A549 (cell line): ENCODE measurements at regions of chr15 and their contacts with region 1.

Region 1: DNA sequence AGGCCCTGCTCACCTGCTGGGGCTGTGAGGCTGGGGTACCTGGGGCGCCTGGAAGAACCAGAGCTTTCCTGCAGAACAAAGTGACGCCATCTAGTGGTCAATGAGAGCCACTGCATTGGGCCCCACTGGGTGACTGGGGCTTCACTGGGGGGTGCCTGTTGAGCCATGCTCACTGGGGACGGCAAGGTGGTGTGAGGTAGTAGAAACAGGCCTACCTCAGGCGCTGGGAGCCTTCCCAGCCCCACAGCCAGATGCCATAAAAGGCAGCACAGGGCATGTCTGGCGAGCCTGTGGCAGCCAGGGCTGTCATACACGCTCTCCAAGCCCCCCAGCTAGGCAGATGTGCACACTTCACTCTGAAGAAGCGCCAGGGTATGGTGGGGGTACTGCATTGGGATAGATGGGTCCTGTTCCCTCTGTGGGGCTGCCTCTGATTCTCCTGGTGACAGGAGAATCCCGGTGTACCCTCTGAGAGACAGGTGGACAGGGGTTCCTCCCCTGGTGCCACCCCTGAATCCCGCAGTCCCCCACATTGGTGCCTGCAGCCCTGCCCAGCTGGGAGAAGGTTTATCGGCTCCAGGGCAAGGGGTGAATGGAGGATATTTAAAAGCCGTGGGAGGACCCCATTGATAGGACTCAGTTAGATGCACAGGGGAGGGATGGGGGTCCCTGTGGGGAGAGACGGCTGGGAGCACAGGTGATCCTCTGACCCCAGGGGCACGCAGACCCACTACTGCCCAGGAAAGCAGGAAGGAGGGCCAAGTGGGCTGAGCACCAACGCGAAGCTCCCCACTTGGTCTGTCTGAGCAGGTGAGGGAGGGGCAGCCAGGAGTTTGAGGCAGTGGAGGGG is 178.8 kb downstream of the NSMCE3 start:
- DNase-seq: peak; percentile 41 to 52
- ATAC-seq: peak; percentile 14 to 85; a peak in 4 of 6 replicates
- H3K4me3 ChIP-seq: no peak overlapping the region
- H3K27ac ChIP-seq: no peak overlapping the region
- H3K4me1 ChIP-seq: no peaks in the 10 kb centered on the region
- CTCF ChIP-seq: peak; percentile 60
- EP300 ChIP-seq: no peak
- POLR2A ChIP-seq: no peak
- RAD21 ChIP-seq: peak; percentile 51 to 54

Region 2: GRCh38 chr15:28921919-28922706 is 168.7 kb before region 1 on chr15:
- CTCF ChIA-PET with region 1: interaction called, 12 read pairs
- POLR2A ChIA-PET with region 1: no interaction called
- DNase-seq: no peak
- ATAC-seq: peak in 1 of 2 experiments; percentile 36; a peak in 2 of 6 replicates
- H3K4me3 ChIP-seq: no peak overlapping the region
- H3K27ac ChIP-seq: no peak overlapping the region
- H3K4me1 ChIP-seq: peaks cover 9% of the 10 kb centered on the region
- CTCF ChIP-seq: no peak
- EP300 ChIP-seq: no peak
- POLR2A ChIP-seq: no peak
- RAD21 ChIP-seq: peak in 1 of 2 experiments; percentile 33; a peak in 2 of 5 replicates

Region 3: DNA sequence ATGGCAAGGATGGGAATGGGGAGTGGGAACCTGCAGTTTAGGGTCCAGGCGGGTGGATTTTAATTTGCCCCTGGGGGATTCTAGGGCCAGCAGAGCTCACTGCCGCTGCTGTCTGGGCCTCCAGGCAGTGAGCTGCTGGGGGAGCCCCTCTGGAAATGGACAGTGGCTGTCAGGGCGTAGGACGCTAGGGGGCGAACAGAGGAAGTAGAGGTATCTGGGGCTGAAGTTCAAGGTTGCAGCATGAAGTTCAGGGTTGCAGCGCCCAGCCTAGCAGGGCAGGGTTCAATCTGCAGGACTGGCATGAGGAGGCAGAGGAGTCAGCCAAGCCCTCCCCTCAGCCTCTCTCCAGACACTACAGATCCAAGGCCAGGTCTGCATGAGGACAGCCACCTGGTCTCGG is 155.5 kb before region 1 on chr15:
- CTCF ChIA-PET with region 1: interaction called, 10 read pairs
- POLR2A ChIA-PET with region 1: no interaction called
- DNase-seq: peak in 1 of 2 experiments; percentile 46
- ATAC-seq: peak; percentile 57 to 85; a peak in 4 of 6 replicates
- H3K4me3 ChIP-seq: no peak overlapping the region
- H3K27ac ChIP-seq: no peak overlapping the region
- H3K4me1 ChIP-seq: no peaks in the 10 kb centered on the region
- CTCF ChIP-seq: peak; percentile 41
- EP300 ChIP-seq: no peak
- POLR2A ChIP-seq: no peak
- RAD21 ChIP-seq: peak; percentile 31 to 45; a peak in 3 of 5 replicates

Region 4: GRCh38 chr15:29070449-29071231 is 20.2 kb before region 1 on chr15:
- CTCF ChIA-PET with region 1: interaction called, 10 read pairs
- POLR2A ChIA-PET with region 1: no interaction called
- DNase-seq: no peak
- ATAC-seq: no peak
- H3K4me3 ChIP-seq: no peak overlapping the region
- H3K27ac ChIP-seq: no peak overlapping the region
- H3K4me1 ChIP-seq: no peaks in the 10 kb centered on the region
- CTCF ChIP-seq: no peak
- EP300 ChIP-seq: no peak
- POLR2A ChIP-seq: no peak
- RAD21 ChIP-seq: no peak

Region 5: GRCh38 chr15:29352402-29352801 is 261.6 kb after region 1 on chr15:
- CTCF ChIA-PET with region 1: no interaction called
- POLR2A ChIA-PET with region 1: no interaction called
- DNase-seq: no peak
- ATAC-seq: no peak
- H3K4me3 ChIP-seq: no peak overlapping the region
- H3K27ac ChIP-seq: no peak overlapping the region
- H3K4me1 ChIP-seq: no peaks in the 10 kb centered on the region
- CTCF ChIP-seq: no peak
- EP300 ChIP-seq: no peak
- POLR2A ChIP-seq: no peak
- RAD21 ChIP-seq: no peak